Heart left ventricle (tissue), 16 donors: ENCODE measurements at regions of chr1 and their contacts with region 1.

Region 1: DNA sequence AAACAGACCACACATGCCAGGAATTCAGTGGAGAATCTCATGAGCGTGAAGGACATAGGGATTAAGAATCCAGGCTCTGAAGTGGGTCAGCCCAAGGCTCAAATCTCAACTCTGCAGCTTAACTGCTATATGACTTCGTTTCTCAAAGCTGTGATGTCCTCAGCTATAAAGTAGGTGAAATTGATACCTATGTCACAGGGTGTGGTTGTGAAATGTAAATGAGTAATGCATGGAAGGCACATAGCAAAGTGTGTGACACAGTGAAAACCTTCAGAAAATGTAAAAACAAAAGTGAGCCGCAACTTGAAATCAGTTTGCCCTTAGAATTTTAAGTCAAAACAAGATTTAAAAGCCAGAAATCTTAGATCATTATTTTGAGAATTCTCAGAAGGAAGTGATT is 145.7 kb upstream of the PRMT6 start:
- DNase-seq: no peak
- ATAC-seq: no peak
- H3K4me3 ChIP-seq: no peak overlapping the region
- H3K27ac ChIP-seq: no peak overlapping the region
- H3K4me1 ChIP-seq: no peaks in the 10 kb centered on the region
- H3K27me3 ChIP-seq: no peaks in the 10 kb centered on the region
- CTCF ChIP-seq: no peak
- POLR2A ChIP-seq: no peak

Region 2: DNA sequence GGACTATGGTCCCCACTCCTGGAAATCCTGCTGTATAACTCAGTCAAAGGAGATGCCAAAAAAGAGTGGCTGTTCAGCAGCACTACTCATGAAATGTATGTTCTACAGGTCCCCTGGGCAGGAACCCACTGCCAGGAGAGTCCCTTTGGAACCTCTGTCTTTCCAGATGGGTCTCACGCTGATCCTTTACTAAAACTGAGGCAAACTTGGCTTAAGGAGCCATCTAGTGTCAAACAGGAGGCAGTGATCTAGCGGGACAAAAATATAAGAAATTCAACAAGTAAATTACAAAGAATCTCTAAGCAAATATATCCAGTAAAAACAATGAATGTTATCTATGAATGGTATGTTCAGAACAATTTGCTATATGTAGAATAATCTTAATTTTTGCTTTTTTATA is 65.1 kb after region 1 on chr1:
- intact Hi-C with region 1: loop called in 1 of 10 experiments (anchors 2 kb)
- DNase-seq: no peak
- ATAC-seq: no peak
- H3K4me3 ChIP-seq: no peak overlapping the region
- H3K27ac ChIP-seq: no peak overlapping the region
- H3K4me1 ChIP-seq: no peaks in the 10 kb centered on the region
- H3K27me3 ChIP-seq: no peaks in the 10 kb centered on the region
- CTCF ChIP-seq: no peak
- POLR2A ChIP-seq: no peak

Region 3: DNA sequence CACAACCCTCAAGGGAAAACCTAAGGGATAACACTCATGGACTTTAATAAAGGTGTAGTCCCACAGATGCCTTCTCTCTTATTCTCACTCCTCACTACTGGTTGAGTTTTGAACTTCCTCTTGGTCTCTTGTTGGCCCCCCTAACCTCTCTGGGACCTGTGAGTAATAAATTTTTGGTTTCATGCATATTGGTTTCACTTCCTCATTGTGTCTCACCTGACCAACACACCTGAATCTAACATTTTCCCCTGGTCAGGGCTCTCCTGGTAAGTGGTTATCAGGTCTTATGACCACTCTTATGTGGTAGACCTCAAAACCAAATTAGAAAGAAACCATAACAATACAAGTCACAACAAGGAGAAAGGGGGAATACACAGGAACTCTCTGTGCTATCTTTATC is 85.2 kb after region 1 on chr1:
- intact Hi-C with region 1: no loop called
- DNase-seq: no peak
- ATAC-seq: no peak
- H3K4me3 ChIP-seq: no peak overlapping the region
- H3K27ac ChIP-seq: no peak overlapping the region
- H3K4me1 ChIP-seq: no peaks in the 10 kb centered on the region
- H3K27me3 ChIP-seq: no peaks in the 10 kb centered on the region
- CTCF ChIP-seq: no peak
- POLR2A ChIP-seq: no peak

Region 4: GRCh38 chr1:107016376-107016978 is 105.7 kb after region 1 on chr1:
- intact Hi-C with region 1: no loop called
- DNase-seq: no peak
- ATAC-seq: no peak
- H3K4me3 ChIP-seq: no peak overlapping the region
- H3K27ac ChIP-seq: no peak overlapping the region
- H3K4me1 ChIP-seq: no peaks in the 10 kb centered on the region
- H3K27me3 ChIP-seq: peaks cover 0 to 6% (median 0%) of the 10 kb centered on the region in 9 donors
- CTCF ChIP-seq: no peak
- POLR2A ChIP-seq: no peak